ENCODE measurements at regions of chr1 and their contacts with region 1.

Region 1: GRCh38 chr1:17236779-17237560 is 11.9 kb upstream of the PADI3 start:
- DNase-seq: peak; percentile 94
- ATAC-seq: peak; percentile 87
- H3K4me3 Mint-ChIP-seq: no peak overlapping the region
- H3K27ac Mint-ChIP-seq: no peak overlapping the region
- H3K4me1 Mint-ChIP-seq: no peaks in the 10 kb centered on the region
- H3K27me3 Mint-ChIP-seq: no peaks in the 10 kb centered on the region
- CTCF ChIP-seq: peak; percentile 88

Region 2: DNA sequence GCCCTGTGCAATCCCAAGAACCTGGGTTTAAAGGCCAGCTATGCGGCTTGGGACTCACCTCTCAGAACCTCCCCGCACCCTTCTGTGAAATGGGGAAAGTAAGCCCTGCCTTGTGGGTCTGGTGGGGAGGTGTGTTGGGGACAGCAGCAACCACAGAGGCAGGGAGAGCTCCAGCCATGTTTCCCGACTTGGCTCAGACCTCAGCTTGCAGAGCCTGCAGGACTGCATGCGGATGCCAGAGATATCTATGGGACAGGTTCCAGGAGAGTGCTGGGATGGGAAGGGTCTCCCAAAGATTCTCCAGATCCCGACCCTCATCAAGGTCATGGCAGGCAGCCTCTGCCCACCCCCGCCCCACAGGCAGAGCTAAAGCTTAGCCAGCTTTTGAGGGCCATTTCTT is 11.8 kb before region 1 on chr1:
- CTCF ChIA-PET with region 1: interaction called, 10 read pairs
- POLR2A ChIA-PET with region 1: no interaction called
- intact Hi-C with region 1: no loop called
- DNase-seq: no peak
- ATAC-seq: no peak
- H3K4me3 Mint-ChIP-seq: no peak overlapping the region
- H3K27ac Mint-ChIP-seq: no peak overlapping the region
- H3K4me1 Mint-ChIP-seq: no peaks in the 10 kb centered on the region
- H3K27me3 Mint-ChIP-seq: peaks cover 4% of the 10 kb centered on the region
- CTCF ChIP-seq: no peak

Region 3: GRCh38 chr1:17393230-17393629 is 156.3 kb after region 1 on chr1:
- CTCF ChIA-PET with region 1: no interaction called
- POLR2A ChIA-PET with region 1: no interaction called
- intact Hi-C with region 1: no loop called
- DNase-seq: no peak
- ATAC-seq: no peak
- H3K4me3 Mint-ChIP-seq: no peak overlapping the region
- H3K27ac Mint-ChIP-seq: no peak overlapping the region
- H3K4me1 Mint-ChIP-seq: no peaks in the 10 kb centered on the region
- H3K27me3 Mint-ChIP-seq: no peaks in the 10 kb centered on the region
- CTCF ChIP-seq: no peak